CD14-positive monocyte (primary cell): ENCODE measurements at regions of chr5 and their contacts with region 1.

Region 1: DNA sequence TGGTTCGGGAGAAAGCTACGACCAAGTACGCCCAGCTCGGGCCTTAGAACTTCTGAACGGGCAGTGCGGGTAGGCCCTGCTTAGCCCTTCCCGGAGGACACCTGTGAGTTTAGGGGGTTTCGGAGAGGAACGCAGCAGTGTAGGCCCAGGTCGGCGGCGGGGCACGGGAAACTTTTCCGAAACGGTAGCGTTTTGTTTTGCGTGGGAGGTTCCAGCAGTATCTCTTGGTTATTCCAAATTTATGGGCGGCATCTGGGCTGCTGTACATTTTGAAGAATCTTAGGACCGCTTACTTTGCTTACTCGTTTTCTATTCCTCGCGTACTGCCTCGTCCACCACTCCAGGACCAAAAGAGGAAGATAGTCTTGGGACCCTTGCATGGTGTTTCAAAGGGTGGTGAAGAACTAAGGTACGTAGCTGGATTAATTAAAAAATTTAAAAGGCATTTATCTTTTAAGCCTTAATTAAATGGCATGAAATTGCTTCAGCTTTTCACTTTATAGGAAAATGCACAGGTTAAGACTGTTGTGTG is 492 bp downstream of the TENT2 start:
- DNase-seq: peak; percentile 38 to 53 (median 46)
- H3K4me3 ChIP-seq: peak overlapping the region; percentile 65 to 100 (median 99)
- H3K4me3 Mint-ChIP-seq: peak overlapping the region; percentile 93 to 99
- H3K27ac ChIP-seq: peak overlapping the region; percentile 100
- H3K27ac Mint-ChIP-seq: peak overlapping the region; percentile 99 to 100 (median 99)
- H3K4me1 ChIP-seq: peaks cover 15 to 28% of the 10 kb centered on the region in 2 donors
- H3K4me1 Mint-ChIP-seq: peaks cover 32% of the 10 kb centered on the region
- H3K27me3 ChIP-seq: no peaks in the 10 kb centered on the region
- H3K27me3 Mint-ChIP-seq: no peaks in the 10 kb centered on the region
- CTCF ChIP-seq: no peak

Region 2: GRCh38 chr5:79702606-79703382 is 90.1 kb after region 1 on chr5:
- intact Hi-C with region 1: loop called in 1 of 2 experiments (anchors 5 kb)
- DNase-seq: peak; percentile 79 to 89 (median 83)
- H3K4me3 ChIP-seq: peak overlapping the region in 1 of 3 experiments; percentile 7
- H3K4me3 Mint-ChIP-seq: peak overlapping the region in 1 of 2 donors; percentile 46
- H3K27ac ChIP-seq: peak overlapping the region; percentile 70 to 72
- H3K27ac Mint-ChIP-seq: peak overlapping the region; percentile 80 to 93 (median 86)
- H3K4me1 ChIP-seq: peaks cover 43 to 47% of the 10 kb centered on the region in 2 donors
- H3K4me1 Mint-ChIP-seq: peaks cover 48% of the 10 kb centered on the region
- H3K27me3 ChIP-seq: no peaks in the 10 kb centered on the region
- H3K27me3 Mint-ChIP-seq: peaks cover 0 to 4% (median 0%) of the 10 kb centered on the region in 3 donors
- CTCF ChIP-seq: peak; percentile 65

Region 3: GRCh38 chr5:79811081-79811480 is 198.3 kb after region 1 on chr5:
- intact Hi-C with region 1: no loop called
- DNase-seq: no peak
- H3K4me3 ChIP-seq: no peak overlapping the region
- H3K4me3 Mint-ChIP-seq: no peak overlapping the region
- H3K27ac ChIP-seq: no peak overlapping the region
- H3K27ac Mint-ChIP-seq: no peak overlapping the region
- H3K4me1 ChIP-seq: no peaks in the 10 kb centered on the region
- H3K4me1 Mint-ChIP-seq: no peaks in the 10 kb centered on the region
- H3K27me3 ChIP-seq: no peaks in the 10 kb centered on the region
- H3K27me3 Mint-ChIP-seq: peaks cover 0 to 3% (median 0%) of the 10 kb centered on the region in 3 donors
- CTCF ChIP-seq: no peak

Region 4: DNA sequence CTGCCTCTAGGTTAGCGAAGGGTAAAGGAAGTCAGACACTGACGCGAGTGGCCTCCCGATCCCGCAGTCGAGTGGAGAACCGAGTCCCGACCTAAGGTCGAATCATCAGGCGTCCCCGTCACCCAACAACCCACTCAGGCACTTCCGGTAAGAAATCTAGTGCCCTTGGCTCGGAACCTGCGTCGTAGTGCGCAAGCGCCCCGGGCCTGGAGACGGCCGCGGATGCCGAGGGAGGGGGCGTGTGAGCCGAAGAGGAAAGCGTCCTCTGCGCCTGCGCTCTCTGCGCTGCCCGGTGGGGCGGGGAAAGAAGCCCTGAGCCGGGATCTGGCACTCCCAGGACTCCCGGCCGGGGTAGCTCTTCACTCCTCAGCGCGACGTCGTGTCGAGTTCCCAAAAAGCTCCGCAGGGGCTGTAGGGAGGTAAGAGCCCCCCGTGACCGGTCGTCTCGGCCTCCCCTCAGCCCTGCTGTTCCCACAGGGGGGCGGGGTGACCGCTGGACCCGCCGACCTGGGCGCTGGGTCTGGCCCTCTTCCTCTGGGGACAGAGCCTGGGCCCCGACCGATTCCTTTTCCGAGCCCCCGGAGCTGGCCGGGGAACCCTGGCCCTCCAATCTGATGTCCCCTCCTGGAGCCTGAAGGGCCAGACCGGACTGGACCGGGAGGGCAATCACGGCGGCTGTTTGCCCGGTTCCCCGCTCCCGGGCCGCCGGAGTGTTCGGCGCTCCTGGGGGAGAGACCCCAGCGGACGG is 795.2 kb after region 1 on chr5 and contains the start of gene ZFYVE16:
- intact Hi-C with region 1: loop called in 1 of 2 experiments (anchors 10 kb)
- DNase-seq: peak; percentile 98 to 99 (median 99)
- H3K4me3 ChIP-seq: peak within 1 kb of the TSS; percentile 80 to 97 (median 95)
- H3K4me3 Mint-ChIP-seq: peak within 1 kb of the TSS; percentile 90 to 94
- H3K27ac ChIP-seq: peak within 1 kb of the TSS; percentile 93 to 100
- H3K27ac Mint-ChIP-seq: peak within 1 kb of the TSS; percentile 97 to 100 (median 99)
- H3K4me1 ChIP-seq: peaks cover 31 to 44% of the 10 kb centered on the region in 2 donors
- H3K4me1 Mint-ChIP-seq: peaks cover 40% of the 10 kb centered on the region
- H3K27me3 ChIP-seq: no peaks in the 10 kb centered on the region
- H3K27me3 Mint-ChIP-seq: peaks cover 0 to 2% (median 0%) of the 10 kb centered on the region in 3 donors
- CTCF ChIP-seq: peak; percentile 46
- polyA plus RNA-seq, gene ZFYVE16: 9.4 to 15.8 (median 10.7) TPM